AG04450 (cell line): ENCODE measurements at regions of chr7 and their contacts with region 1.

Region 1: DNA sequence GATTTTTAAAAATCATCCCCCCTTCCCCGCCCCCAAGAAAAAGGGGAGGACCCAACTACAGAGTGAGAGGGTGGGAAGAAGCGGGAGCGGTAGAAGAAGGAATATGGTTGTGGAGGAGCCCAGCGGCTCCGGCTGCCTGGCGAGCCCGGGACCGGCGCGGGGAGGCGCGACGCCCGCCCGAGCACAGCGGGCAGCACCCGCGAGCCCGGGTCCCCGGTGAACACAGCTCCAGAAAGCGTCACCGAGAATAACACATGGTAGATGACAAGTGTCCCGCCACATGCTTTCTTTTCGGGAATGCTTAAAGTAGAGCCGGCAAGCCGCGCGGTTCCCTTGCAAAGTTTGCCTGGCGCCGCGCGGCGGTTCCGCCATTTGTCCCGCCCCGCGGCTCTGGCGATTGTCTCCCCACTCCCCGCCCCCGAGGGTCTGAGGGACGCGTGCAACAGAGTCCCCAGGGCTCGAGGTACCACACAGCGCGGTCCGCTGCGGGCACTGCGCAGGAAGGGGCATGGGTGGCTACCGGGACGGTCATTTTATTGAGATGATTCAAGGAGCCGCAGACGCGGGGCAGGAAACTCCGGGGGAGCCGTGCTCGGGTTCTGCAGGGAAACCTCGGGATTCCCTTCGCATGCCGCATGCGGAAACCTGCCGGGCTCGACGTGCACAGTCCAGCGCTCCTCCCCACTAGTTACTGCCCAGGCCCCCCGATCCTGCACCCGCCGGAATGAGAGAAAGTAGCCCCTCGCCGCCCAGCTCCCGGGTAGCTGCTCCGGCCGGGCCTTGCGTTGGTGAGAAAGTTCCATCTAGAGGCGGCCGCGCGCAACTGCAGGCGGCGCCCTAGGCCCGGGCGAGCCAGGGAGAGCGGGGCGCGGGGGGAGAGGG is 781 bp upstream of the GRM8 start:
- DNase-seq: no peak
- H3K4me3 ChIP-seq: peak overlapping the region; percentile 68
- H3K27ac ChIP-seq: no peak overlapping the region
- H3K27me3 ChIP-seq: peaks cover 44% of the 10 kb centered on the region
- CTCF ChIP-seq: peak; percentile 81

Region 2: GRCh38 chr7:126803060-126803665 is 450.4 kb before region 1 on chr7:
- CTCF ChIA-PET with region 1: interaction called, 13 read pairs
- POLR2A ChIA-PET with region 1: no interaction called
- DNase-seq: peak; percentile 2
- H3K4me3 ChIP-seq: no peak overlapping the region
- H3K27ac ChIP-seq: no peak overlapping the region
- H3K27me3 ChIP-seq: no peaks in the 10 kb centered on the region
- CTCF ChIP-seq: peak; percentile 54

Region 3: DNA sequence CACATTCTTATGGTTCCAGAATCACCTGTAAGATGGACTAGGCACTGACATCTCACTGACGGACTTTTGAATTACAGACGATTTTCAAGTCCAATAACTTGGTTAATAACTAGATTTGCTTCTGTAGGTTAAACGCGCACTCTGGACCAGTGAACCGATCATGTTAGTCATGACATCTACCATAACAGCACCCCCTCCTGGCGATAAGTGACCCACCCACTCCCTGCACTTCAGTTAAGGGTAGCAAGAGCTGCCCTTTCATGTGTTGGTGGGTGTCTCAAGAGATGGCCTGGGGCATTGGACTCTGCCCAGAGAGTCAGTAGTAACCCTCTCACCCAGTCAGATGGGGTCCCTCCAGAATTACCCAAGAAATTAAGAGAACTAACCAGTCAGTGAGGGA is 13.7 kb before region 1 on chr7:
- CTCF ChIA-PET with region 1: interaction called, 10 read pairs
- POLR2A ChIA-PET with region 1: no interaction called
- DNase-seq: no peak
- H3K4me3 ChIP-seq: no peak overlapping the region
- H3K27ac ChIP-seq: no peak overlapping the region
- H3K27me3 ChIP-seq: no peaks in the 10 kb centered on the region
- CTCF ChIP-seq: no peak

Region 4: GRCh38 chr7:128422842-128423241 is 1169.3 kb after region 1 on chr7:
- CTCF ChIA-PET with region 1: no interaction called
- POLR2A ChIA-PET with region 1: no interaction called
- DNase-seq: no peak
- H3K4me3 ChIP-seq: no peak overlapping the region
- H3K27ac ChIP-seq: no peak overlapping the region
- H3K27me3 ChIP-seq: peaks cover 10% of the 10 kb centered on the region
- CTCF ChIP-seq: no peak